ENCODE measurements at regions of chr1 and their contacts with region 1.

Region 1: DNA sequence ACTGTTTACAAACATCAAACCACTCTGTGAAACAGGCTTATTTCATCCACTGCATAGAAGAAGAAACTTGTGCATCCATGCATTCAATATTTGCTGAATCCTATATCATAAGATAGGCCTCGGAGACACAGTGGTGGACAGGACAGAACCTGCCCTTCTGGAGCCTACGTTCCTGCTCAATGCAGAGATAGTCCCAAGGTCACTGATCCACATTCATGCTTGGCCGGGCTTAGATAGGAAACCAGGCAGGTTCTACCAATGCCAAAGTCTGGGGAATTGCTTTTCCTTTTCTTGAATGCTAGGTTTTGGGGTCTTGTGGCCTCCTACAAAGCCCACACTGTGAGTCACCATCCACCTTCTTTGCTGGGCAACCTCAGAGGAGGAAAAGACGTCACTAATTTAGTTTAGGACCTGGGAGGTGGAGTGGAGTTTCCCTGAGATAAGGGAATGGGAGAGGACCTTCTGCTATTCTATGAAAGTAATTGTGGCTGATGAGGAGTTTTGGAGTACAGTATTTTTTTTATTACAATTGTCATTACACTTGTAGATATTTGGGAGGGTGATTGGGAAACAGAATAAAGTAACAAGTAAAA is 99.7 kb upstream of the CD34 start:
- DNase-seq: no peak
- ATAC-seq: no peak
- H3K4me3 ChIP-seq: no peak overlapping the region
- H3K27ac ChIP-seq: no peak overlapping the region
- H3K4me1 ChIP-seq: no peaks in the 10 kb centered on the region
- H3K27me3 ChIP-seq: no peaks in the 10 kb centered on the region
- CTCF ChIP-seq: no peak
- POLR2A ChIP-seq: no peak

Region 2: GRCh38 chr1:208047476-208047934 is 36.9 kb after region 1 on chr1:
- in situ Hi-C with region 1: no loop called
- intact Hi-C with region 1: no loop called
- DNase-seq: peak; percentile 71 to 81
- ATAC-seq: peak; percentile 78 to 85
- H3K4me3 ChIP-seq: no peak overlapping the region
- H3K27ac ChIP-seq: peak overlapping the region; percentile 65 to 81 (median 74)
- H3K4me1 ChIP-seq: peaks cover 24 to 29% of the 10 kb centered on the region in 2 donors
- H3K27me3 ChIP-seq: no peaks in the 10 kb centered on the region
- CTCF ChIP-seq: no peak
- POLR2A ChIP-seq: no peak

Region 3: DNA sequence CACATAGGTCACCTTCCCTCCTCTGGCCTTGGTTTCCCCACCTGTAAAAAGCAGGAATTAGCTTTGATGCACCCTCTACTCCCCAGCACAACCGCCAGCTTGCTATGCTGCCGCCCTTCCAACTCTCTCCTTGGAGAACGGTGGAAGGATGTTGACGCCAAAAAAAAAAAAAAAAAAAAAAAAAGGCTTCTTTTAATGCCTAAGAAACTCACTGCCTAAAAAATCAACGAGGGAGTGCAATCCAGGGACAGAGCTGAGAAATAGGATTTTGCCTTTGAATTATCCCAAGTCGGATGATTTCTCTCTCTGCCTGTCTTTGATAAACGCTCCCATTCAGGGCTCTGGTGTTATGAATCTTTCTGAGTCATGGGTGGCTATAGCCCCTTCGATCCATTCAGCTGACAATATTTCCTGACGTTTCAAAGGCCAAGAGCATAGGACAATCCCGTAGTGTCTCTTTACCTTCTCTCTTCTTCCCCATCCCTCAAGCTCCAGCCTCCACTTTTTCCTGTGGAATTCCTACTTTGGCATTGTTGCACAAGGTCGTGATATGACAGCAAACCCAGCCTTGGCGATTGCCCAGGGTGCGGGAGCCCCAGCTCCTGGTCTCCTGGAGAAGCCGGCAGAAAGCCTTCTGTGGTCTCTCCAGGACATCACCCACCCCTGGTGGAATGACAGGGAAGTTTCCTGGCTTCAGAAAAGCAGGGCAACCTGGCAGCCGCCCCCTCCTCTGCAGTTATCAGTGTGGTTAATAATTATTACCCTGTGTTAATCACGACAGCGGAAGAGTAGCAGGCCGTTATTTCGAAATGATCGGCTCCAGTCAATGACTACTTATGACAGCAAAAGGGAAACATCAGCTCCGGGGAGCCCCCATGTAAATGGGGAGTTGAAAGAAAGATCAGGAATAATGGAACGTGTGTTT is 241.6 kb after region 1 on chr1:
- in situ Hi-C with region 1: loop called in 1 of 4 experiments (anchors 10 kb)
- intact Hi-C with region 1: no loop called
- DNase-seq: no peak
- ATAC-seq: no peak
- H3K4me3 ChIP-seq: no peak overlapping the region
- H3K27ac ChIP-seq: no peak overlapping the region
- H3K4me1 ChIP-seq: no peaks in the 10 kb centered on the region
- H3K27me3 ChIP-seq: no peaks in the 10 kb centered on the region
- CTCF ChIP-seq: peak in 1 of 5 experiments; percentile 33
- POLR2A ChIP-seq: no peak

Measured in gastrocnemius medialis (tissue), 4 donors.